K562 (cell line): ENCODE measurements at regions of chr5 and their contacts with region 1.

Region 1: GRCh38 chr5:57137401-57137800 is 36.5 kb upstream of the GPBP1 start:
- DNase-seq: peak in 1 of 4 experiments; percentile 8
- ATAC-seq: no peak
- H3K4me3 ChIP-seq: no peak overlapping the region
- H3K27ac ChIP-seq: no peak overlapping the region
- H3K4me1 ChIP-seq: peaks cover 0 to 2% of the 10 kb centered on the region in 2 experiments; a peak in 2 of 5 replicates
- H3K27me3 ChIP-seq: peaks cover 5 to 17% of the 10 kb centered on the region in 2 experiments; a peak in 3 of 5 replicates
- CTCF ChIP-seq: no peak
- EP300 ChIP-seq: no peak
- POLR2A ChIP-seq: no peak
- RAD21 ChIP-seq: no peak

Region 2: GRCh38 chr5:56993241-56993640 is 144.2 kb before region 1 on chr5:
- CTCF ChIA-PET with region 1: no interaction called
- POLR2A ChIA-PET with region 1: no interaction called
- in situ Hi-C with region 1: no loop called
- intact Hi-C with region 1: loop called (anchors 10 kb)
- DNase-seq: no peak
- ATAC-seq: no peak
- H3K4me3 ChIP-seq: no peak overlapping the region
- H3K27ac ChIP-seq: no peak overlapping the region
- H3K4me1 ChIP-seq: no peaks in the 10 kb centered on the region
- H3K27me3 ChIP-seq: peaks cover 16 to 21% of the 10 kb centered on the region in 2 experiments
- CTCF ChIP-seq: no peak
- EP300 ChIP-seq: no peak
- POLR2A ChIP-seq: no peak
- RAD21 ChIP-seq: no peak

Region 3: GRCh38 chr5:57221049-57221568 is 83.7 kb after region 1 on chr5:
- CTCF ChIA-PET with region 1: interaction called, 4 read pairs
- POLR2A ChIA-PET with region 1: interaction called, 3 read pairs
- in situ Hi-C with region 1: no loop called
- intact Hi-C with region 1: loop called (anchors 2 kb)
- DNase-seq: peak; percentile 34 to 69 (median 43)
- ATAC-seq: peak; percentile 88
- H3K4me3 ChIP-seq: no peak overlapping the region
- H3K27ac ChIP-seq: no peak overlapping the region
- H3K4me1 ChIP-seq: no peaks in the 10 kb centered on the region
- H3K27me3 ChIP-seq: no peaks in the 10 kb centered on the region
- CTCF ChIP-seq: peak; percentile 47 to 83 (median 49); a peak in 4 of 6 replicates
- EP300 ChIP-seq: no peak
- POLR2A ChIP-seq: no peak
- RAD21 ChIP-seq: peak; percentile 88